ENCODE measurements at regions of chr12 and their contacts with region 1.

Region 1: DNA sequence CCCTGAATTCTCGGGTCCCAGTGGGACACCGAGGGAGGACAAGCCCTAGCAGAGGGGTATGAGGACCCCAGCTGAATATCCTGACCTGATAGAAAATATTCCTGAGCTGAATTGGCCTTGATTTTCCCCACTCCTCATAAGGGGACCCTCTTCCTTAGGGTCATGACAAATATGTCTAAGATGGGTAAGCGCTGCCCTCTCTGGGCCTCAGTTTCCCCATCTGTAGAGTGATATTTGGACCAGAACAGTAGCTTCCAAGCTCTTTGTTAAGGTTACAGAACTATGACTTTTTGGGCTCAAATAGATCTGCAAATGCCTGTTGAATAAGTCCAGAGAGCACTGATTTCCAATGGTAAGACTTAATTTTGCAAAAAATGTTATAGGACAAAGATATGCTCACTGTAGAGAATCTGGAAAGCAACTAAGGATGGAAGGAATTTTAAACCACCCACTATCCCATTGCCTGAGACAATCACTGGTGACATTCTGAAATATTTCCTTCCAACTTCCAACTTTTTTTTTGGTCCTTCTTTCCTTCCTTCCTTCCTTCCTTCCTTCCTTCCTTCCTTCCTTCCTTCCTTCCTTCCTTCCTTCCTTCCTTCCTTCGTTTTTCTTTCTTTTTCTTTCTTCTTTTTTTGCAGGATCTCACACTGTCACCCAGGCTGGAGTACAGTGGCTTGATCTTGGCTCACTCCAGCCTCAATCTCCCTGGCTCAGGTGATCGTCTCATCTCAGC is 32.0 kb downstream of the MYL2 start:
- DNase-seq: no peak
- ATAC-seq: no peak; the same call in 1 of the 2 replicates
- H3K4me3 ChIP-seq: peak overlapping the region; percentile 41 to 70; a peak in 2 of 4 replicates
- H3K27ac ChIP-seq: no peak overlapping the region
- H3K4me1 ChIP-seq: no peaks in the 10 kb centered on the region
- H3K27me3 ChIP-seq: no peaks in the 10 kb centered on the region
- CTCF ChIP-seq: no peak; the same call in none of the 2 replicates

Region 2: DNA sequence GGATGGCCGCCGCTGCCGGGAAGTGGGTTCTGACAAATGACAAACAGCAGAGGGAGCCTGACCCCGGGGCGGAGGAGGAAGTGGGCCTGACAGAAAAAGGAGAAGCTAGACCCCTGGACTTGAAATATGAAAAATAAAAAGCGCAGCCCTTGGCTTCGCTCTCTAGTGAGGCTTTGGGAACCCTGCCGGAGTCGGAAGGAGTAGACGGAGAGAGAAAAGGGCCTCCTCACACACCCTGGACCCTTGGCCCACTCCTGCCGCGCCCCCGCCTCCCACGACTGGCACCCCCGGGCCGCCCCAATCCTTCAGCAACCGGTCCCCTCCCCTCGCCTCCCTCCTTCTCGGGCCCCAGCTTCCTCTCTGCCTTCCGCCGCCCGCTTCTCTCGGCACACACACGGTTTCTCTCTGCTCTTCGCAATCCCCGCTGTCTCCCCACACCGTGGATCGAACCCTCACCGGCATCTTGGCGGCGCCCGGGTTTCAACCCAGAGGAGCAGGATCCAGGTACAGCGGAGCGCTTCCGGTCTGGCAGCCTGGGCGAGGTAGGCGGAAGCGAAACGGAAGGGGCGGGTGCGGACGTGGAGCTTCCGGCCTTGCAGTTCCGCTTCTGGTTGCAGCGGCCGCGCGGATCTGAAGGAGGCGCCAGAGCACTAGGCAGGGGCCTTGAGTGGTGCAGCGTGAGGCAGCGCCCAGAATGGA is 438.5 kb before region 1 on chr12 and contains the start of gene ARPC3:
- CTCF ChIA-PET with region 1: interaction called, 10 read pairs
- POLR2A ChIA-PET with region 1: no interaction called
- in situ Hi-C with region 1: no loop called
- intact Hi-C with region 1: no loop called
- DNase-seq: peak; percentile 67
- ATAC-seq: peak; percentile 99
- H3K4me3 ChIP-seq: peak within 1 kb of the TSS; percentile 77 to 97
- H3K27ac ChIP-seq: peak within 1 kb of the TSS; percentile 85
- H3K4me1 ChIP-seq: peaks cover 6% of the 10 kb centered on the region; the same call in 1 of the 2 replicates
- H3K27me3 ChIP-seq: no peaks in the 10 kb centered on the region
- CTCF ChIP-seq: peak; percentile 96
- total RNA-seq, gene ARPC3: 319 TPM

Region 3: GRCh38 chr12:110836291-110836690 is 52.1 kb before region 1 on chr12:
- CTCF ChIA-PET with region 1: no interaction called
- POLR2A ChIA-PET with region 1: no interaction called
- in situ Hi-C with region 1: no loop called
- intact Hi-C with region 1: loop called (anchors 10 kb)
- DNase-seq: no peak
- ATAC-seq: no peak
- H3K4me3 ChIP-seq: no peak overlapping the region
- H3K27ac ChIP-seq: no peak overlapping the region
- H3K4me1 ChIP-seq: no peaks in the 10 kb centered on the region
- H3K27me3 ChIP-seq: no peaks in the 10 kb centered on the region
- CTCF ChIP-seq: no peak

Region 4: DNA sequence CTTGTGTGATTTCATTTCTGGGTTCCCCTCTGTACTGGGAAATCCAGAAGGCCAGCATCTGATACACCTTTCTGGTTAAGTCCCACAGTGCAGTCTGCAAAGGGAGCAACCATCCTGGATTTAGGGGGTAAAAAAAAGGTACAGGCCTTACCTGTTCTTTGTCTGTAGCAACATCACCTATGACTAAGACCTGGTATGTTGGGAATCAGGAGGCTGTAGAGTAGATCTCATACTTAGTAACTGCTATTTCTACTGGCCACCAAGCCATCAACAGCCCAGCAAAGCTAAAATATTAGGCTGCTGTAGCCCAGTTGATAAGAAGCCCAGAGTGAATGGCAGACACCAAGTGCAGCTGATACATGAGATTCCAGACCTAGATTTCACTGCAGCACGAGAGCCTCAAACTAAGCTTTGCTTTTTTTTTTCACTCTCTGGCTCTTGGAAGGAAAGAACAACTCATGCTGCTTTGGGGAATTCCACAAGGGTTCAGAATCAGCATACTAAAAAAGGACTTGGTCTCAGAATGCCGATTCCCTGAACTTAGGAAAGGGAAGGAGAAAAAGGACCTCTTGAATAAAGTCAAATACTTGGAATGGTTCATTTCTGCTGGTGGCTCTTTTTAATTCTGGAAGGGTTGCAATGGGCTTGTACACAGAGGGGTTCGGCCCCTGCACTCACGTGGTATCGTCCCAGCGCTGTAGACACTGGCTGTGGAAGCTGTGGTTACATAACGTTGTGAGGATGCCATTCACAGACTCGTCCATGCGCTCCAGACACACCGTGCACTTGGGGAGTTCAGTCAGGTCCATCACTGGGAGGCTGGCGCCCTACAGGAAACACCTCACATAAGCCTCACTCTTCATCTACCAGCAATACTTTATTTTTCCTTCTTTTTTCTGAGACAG is 776.8 kb after region 1 on chr12:
- CTCF ChIA-PET with region 1: no interaction called
- POLR2A ChIA-PET with region 1: no interaction called
- in situ Hi-C with region 1: no loop called
- intact Hi-C with region 1: no loop called
- DNase-seq: no peak
- ATAC-seq: no peak
- H3K4me3 ChIP-seq: no peak overlapping the region
- H3K27ac ChIP-seq: no peak overlapping the region
- H3K4me1 ChIP-seq: no peaks in the 10 kb centered on the region
- H3K27me3 ChIP-seq: no peaks in the 10 kb centered on the region
- CTCF ChIP-seq: no peak

Measured in Panc1 (cell line).